AG04450 (cell line): ENCODE measurements at regions of chr14 and their contacts with region 1.

Region 1: DNA sequence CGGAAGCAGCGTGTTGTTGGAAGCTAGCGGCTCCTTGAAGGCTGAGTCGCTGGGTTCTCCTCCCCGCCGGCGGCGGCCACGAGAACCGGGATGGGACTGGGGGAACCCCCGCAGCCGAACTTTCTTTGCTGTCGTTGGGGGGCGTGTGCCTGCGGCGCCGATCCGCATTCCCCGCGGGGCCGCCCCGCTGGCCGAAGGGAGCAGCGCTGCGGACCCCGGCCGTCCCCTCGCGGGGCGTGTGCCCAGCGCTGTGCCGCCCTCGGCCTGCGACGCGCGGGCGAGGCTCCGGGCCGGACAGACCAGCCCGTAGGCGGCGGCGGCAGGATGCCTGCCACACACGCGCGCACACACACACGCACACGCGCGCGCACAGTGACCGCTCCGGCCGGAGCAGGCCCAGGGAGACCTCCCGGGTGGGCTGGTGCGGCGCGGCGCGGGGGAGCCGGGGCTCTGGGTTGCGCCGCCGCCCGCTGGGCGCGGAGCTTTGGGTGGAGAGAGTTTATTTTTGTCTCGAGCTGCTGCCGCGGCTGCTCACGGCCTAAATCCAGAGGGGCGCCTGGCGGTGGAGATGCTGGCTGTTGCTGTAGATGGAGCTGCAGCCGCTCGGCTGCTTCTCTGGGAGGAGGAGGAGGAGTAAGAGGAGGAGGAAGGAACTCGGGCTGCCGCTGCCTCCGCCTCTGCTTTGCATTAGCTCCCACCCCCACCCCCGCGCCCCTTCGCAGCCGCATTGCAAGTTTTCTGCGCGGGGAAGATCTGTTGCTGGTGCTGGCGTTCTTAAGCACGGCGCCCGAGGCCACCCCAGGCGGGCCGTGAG is at the start of gene SAMD4A:
- DNase-seq: peak; percentile 71
- H3K4me3 ChIP-seq: peak within 1 kb of the TSS; percentile 80
- H3K27ac ChIP-seq: peak within 1 kb of the TSS; percentile 86
- H3K27me3 ChIP-seq: no peaks in the 10 kb centered on the region
- CTCF ChIP-seq: peak; percentile 46
- polyA plus RNA-seq, gene SAMD4A: 12.7 and 21.0 TPM in 2 replicates

Region 2: DNA sequence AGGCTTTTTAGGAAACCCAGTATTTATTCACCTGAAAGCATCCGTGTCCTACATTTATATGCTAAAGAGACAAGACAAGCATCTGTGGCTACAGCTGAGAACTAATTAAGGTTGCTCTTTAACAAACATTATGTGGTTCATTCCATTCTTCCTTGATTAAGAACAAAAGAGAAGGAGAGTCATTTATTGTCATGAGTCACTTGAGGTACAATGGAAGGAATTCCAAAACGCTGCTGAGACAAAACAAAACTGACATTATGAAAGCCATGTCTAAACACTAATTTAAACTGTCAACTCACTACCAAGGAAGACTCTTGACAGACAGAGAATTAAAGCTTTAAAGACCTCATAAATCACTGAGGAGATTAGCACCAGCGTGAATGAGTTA is 824.4 kb before region 1 on chr14:
- CTCF ChIA-PET with region 1: no interaction called
- POLR2A ChIA-PET with region 1: no interaction called
- DNase-seq: no peak
- H3K4me3 ChIP-seq: no peak overlapping the region
- H3K27ac ChIP-seq: no peak overlapping the region
- H3K27me3 ChIP-seq: no peaks in the 10 kb centered on the region
- CTCF ChIP-seq: no peak

Region 3: DNA sequence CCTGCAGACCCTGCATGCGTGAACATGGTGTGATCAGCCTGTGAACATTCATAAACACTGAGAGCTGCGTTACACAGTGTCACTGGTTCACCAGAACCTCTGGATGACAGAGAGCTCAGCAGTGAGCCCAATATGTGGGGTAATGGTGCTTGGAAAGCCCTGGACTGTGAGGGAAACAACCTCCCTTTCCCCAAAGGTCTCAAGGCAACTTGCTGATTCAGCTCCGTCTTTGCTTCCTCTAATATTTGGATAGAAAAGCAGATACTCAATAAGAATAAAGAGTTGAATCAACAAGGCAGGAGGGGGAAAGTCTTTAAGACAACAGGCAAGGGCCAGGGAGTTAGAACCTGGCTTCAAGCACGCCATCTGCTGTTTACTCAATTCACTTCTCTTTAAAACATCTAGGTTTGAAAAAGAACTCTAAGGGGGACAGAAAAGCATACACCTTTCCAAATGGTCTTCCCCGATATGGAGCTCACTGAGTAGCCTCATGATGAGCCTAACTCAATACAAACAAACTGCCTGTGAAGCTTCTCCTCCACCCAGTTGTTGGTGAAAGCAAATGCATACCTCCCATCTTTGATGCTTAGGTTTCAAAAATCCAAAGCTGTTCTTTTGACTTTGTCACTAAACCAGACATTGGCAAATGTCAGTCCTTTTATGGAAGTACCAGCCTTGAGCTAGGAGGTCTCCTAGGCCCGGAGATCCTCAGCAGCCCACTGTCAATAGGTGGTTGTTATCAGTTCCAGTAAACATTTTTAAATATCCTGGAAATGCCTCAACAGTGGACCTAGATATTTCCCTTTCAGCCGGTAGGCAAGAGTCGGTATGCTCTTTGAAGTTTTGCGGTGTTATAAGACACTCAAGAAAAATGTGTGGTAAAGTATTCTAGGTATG is 76.4 kb after region 1 on chr14:
- CTCF ChIA-PET with region 1: interaction called, 9 read pairs
- POLR2A ChIA-PET with region 1: interaction called, 10 read pairs
- DNase-seq: no peak
- H3K4me3 ChIP-seq: no peak overlapping the region
- H3K27ac ChIP-seq: no peak overlapping the region
- H3K27me3 ChIP-seq: no peaks in the 10 kb centered on the region
- CTCF ChIP-seq: peak; percentile 48; the same call in 1 of the 2 replicates

Region 4: GRCh38 chr14:54683882-54684794 is 117.5 kb after region 1 on chr14:
- CTCF ChIA-PET with region 1: interaction called, 99 read pairs
- POLR2A ChIA-PET with region 1: interaction called, 26 read pairs
- DNase-seq: peak; percentile 33
- H3K4me3 ChIP-seq: peak overlapping the region; percentile 34
- H3K27ac ChIP-seq: peak overlapping the region; percentile 88
- H3K27me3 ChIP-seq: no peaks in the 10 kb centered on the region
- CTCF ChIP-seq: no peak

Region 5: GRCh38 chr14:54718046-54718445 is 151.4 kb after region 1 on chr14:
- CTCF ChIA-PET with region 1: interaction called, 6 read pairs
- POLR2A ChIA-PET with region 1: interaction called, 16 read pairs
- DNase-seq: no peak
- H3K4me3 ChIP-seq: no peak overlapping the region
- H3K27ac ChIP-seq: peak overlapping the region; percentile 84
- H3K27me3 ChIP-seq: no peaks in the 10 kb centered on the region
- CTCF ChIP-seq: no peak

Region 6: DNA sequence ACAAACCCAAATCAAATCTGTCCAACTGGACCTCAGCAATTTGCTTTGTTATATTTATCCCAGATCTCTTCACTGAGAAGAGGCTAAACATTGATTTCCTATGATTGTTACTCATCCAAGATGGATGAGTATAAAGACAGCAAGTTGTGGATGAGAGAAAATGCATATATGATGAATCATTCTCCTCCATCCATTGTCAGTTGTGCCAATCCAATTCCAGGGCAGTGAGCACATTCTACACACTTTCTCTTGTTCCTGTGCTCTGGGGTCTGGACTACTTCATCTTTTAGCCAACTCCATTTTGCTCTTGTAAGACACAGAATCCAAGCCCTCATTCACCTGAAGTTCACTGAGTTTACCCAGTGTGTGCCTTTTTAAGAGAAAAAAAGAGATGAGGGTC is 230.3 kb after region 1 on chr14:
- CTCF ChIA-PET with region 1: interaction called, 90 read pairs
- POLR2A ChIA-PET with region 1: interaction called, 4 read pairs
- DNase-seq: peak; percentile 21
- H3K4me3 ChIP-seq: no peak overlapping the region
- H3K27ac ChIP-seq: no peak overlapping the region
- H3K27me3 ChIP-seq: no peaks in the 10 kb centered on the region
- CTCF ChIP-seq: no peak